ENCODE measurements at regions of chr9 and their contacts with region 1.

Region 1: DNA sequence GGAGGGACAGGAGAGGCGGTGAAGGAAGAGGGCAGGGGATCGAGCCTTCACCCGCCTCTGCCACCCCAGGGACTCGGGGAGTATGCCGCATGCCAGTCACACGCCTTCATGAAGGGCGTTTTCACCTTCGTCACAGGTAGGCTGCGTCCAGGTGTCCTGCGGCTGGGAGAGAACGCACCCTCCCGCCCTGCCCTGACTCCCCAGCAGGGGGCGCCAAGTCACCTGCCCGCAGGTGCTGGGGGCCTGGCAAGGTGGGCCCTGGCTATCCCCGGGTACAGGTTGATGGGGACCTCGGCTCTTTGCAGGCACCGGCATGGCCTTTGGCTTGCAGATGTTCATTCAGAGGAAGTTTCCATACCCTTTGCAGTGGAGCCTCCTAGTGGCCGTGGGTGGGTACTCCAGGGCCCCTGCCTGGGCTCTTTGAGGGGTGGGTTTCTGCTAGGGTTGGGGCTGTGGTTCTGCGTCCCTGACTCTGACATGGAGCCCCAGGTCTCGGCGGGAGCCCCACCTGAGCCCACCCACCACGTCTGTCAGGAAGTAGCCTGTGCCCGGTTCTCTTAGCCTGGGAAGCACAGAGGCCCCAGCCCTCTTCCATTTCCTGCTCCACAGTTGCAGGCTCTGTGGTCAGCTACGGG is 615 bp downstream of the TMEM141 start:
- DNase-seq: peak; percentile 79
- H3K4me3 Mint-ChIP-seq: peak overlapping the region; percentile 82
- H3K27ac Mint-ChIP-seq: peak overlapping the region; percentile 95
- H3K4me1 Mint-ChIP-seq: peaks cover 41% of the 10 kb centered on the region
- H3K27me3 Mint-ChIP-seq: peaks cover 28% of the 10 kb centered on the region

Region 2: GRCh38 chr9:136779808-136780207 is 12.0 kb before region 1 on chr9:
- CTCF ChIA-PET with region 1: interaction called, 24 read pairs
- DNase-seq: no peak
- H3K4me3 Mint-ChIP-seq: no peak overlapping the region
- H3K27ac Mint-ChIP-seq: no peak overlapping the region
- H3K4me1 Mint-ChIP-seq: no peaks in the 10 kb centered on the region
- H3K27me3 Mint-ChIP-seq: peaks cover 42% of the 10 kb centered on the region

Region 3: DNA sequence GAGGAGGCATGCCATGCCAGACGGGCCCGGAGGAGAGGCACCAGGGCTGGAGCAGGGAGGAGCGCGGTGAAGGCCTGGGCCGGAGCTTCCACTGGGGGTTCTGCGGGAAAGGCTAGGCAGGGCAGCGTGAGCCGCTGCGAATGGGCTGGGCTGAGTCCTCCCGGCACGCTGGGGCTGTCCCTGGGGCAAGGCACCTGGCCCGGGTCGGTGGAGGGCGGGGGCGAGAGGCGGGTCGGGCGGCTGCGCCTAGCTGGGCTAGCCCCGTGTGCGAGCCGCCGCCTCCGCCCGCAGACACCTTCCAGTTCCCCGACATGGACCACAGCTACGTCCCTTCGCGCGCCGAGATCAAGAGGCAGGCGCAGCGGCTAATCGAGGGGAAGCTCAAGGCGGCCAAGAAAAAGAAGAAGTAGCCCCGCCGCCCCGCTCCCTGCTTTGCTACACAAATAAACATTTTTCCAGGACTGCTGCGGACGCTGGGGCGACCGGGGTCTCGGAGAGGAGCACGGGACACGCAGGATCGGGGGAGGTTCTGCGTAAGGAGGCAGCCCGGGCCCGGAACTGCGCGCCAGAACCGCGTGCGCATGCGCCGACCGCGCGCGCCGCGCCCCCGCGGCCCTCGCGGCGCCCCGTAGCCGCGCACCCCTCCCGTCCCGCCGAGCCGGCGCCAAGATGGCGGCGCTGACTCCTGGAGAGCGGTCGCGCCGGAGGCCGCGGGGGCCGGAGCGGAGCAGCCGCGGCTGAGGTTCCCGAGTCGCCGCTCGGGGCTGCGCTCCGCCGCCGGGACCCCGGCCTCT is 15.7 kb after region 1 on chr9 and contains the start of gene RABL6:
- CTCF ChIA-PET with region 1: interaction called, 29 read pairs
- DNase-seq: peak; percentile 83
- H3K4me3 Mint-ChIP-seq: peak within 1 kb of the TSS; percentile 86
- H3K27ac Mint-ChIP-seq: peak within 1 kb of the TSS; percentile 85
- H3K4me1 Mint-ChIP-seq: peaks cover 52% of the 10 kb centered on the region
- H3K27me3 Mint-ChIP-seq: peaks cover 2% of the 10 kb centered on the region